ENCODE measurements at regions of chr3 and their contacts with region 1.

Region 1: DNA sequence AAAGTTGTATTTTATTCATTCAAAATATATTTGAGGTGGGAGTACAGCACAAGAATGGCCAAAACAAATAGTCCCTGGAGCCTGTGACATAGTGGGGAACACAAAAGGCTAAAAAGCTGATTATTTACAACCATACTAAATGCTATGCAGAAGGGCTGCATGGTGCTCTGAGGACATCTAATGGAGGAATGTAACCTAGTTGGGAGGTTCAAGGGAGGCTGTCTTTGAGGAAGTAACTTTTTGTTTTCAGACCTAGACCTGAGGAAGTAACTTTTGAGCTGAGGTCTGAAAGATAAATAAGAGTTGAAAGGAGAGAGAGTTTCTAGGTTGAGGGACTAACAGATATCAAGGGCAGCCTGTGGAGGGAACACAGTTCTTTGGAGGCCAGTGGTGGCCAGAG is 34.8 kb upstream of the RASA2 start:
- DNase-seq: peak in 5 of 9 experiments; percentile 28 to 77 (median 55)
- ATAC-seq: peak; percentile 88
- H3K4me3 ChIP-seq: no peak overlapping the region
- H3K4me3 Mint-ChIP-seq: no peak overlapping the region
- H3K27ac ChIP-seq: peak overlapping the region in 1 of 2 experiments; percentile 51
- H3K27ac Mint-ChIP-seq: no peak overlapping the region
- H3K4me1 ChIP-seq: peaks cover 15% of the 10 kb centered on the region
- H3K4me1 Mint-ChIP-seq: peaks cover 7% of the 10 kb centered on the region
- H3K27me3 ChIP-seq: no peaks in the 10 kb centered on the region
- H3K27me3 Mint-ChIP-seq: peaks cover 2% of the 10 kb centered on the region
- CTCF ChIP-seq: peak; percentile 55

Region 2: GRCh38 chr3:141011232-141011996 is 440.6 kb before region 1 on chr3:
- CTCF ChIA-PET with region 1: no interaction called
- POLR2A ChIA-PET with region 1: no interaction called
- intact Hi-C with region 1: loop called in 1 of 2 experiments (anchors 5 kb)
- DNase-seq: peak; percentile 48 to 85 (median 73)
- ATAC-seq: peak; percentile 99
- H3K4me3 ChIP-seq: no peak overlapping the region
- H3K4me3 Mint-ChIP-seq: no peak overlapping the region
- H3K27ac ChIP-seq: no peak overlapping the region
- H3K27ac Mint-ChIP-seq: no peak overlapping the region
- H3K4me1 ChIP-seq: peaks cover 5% of the 10 kb centered on the region
- H3K4me1 Mint-ChIP-seq: peaks cover 5% of the 10 kb centered on the region
- H3K27me3 ChIP-seq: peaks cover 0 to 6% of the 10 kb centered on the region in 2 experiments
- H3K27me3 Mint-ChIP-seq: peaks cover 22% of the 10 kb centered on the region
- CTCF ChIP-seq: peak; percentile 71

Region 3: GRCh38 chr3:141237701-141238521 is 214.1 kb before region 1 on chr3:
- CTCF ChIA-PET with region 1: interaction called, 6 read pairs
- POLR2A ChIA-PET with region 1: no interaction called
- intact Hi-C with region 1: loop called (anchors 5 kb)
- DNase-seq: peak in 3 of 9 experiments; percentile 19 to 55 (median 29)
- ATAC-seq: no peak
- H3K4me3 ChIP-seq: no peak overlapping the region
- H3K4me3 Mint-ChIP-seq: peak overlapping the region; percentile 69
- H3K27ac ChIP-seq: peak overlapping the region in 1 of 2 experiments; percentile 66
- H3K27ac Mint-ChIP-seq: peak overlapping the region; percentile 90
- H3K4me1 ChIP-seq: peaks cover 74% of the 10 kb centered on the region
- H3K4me1 Mint-ChIP-seq: peaks cover 90% of the 10 kb centered on the region
- H3K27me3 ChIP-seq: no peaks in the 10 kb centered on the region
- H3K27me3 Mint-ChIP-seq: no peaks in the 10 kb centered on the region
- CTCF ChIP-seq: no peak

Region 4: DNA sequence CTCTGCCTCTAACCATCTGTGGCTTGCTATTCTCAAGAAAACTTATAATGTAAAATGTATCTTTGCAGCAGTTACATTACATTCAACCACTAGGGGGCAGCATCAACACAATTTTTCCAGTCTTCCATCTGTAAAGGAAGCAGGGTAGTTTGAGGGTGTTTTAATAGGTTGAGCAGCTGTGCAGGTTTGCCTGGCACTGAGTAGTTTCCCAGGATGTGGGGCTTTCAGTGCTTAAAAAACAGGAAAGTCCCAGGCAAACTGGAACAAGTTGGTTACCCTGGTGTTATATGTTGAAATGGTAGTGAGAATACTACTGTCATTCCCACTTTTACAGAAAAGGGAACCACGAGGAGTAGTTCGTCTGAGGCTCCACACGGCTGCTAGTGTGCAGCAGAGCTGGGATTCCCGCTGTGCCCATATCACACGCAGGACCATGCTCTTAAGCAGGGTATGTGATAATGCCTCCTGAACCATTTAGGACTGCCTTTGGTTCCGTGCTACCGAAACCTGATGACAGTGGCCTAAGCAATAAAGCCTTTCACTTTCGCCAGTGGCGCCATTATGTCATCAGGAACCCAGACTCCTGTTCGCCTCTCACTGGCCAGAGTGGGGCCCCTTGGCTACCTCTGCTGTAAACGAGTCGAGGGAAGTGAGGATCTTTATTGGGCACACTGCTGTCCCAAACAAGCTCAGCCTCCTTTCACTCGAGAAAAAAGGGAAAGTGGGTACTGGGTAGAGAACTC is 148.4 kb before region 1 on chr3:
- CTCF ChIA-PET with region 1: interaction called, 242 read pairs
- POLR2A ChIA-PET with region 1: interaction called, 13 read pairs
- intact Hi-C with region 1: loop called (anchors 1 kb)
- DNase-seq: peak in 8 of 9 experiments; percentile 40 to 85 (median 64)
- ATAC-seq: peak; percentile 56
- H3K4me3 ChIP-seq: no peak overlapping the region
- H3K4me3 Mint-ChIP-seq: no peak overlapping the region
- H3K27ac ChIP-seq: no peak overlapping the region
- H3K27ac Mint-ChIP-seq: no peak overlapping the region
- H3K4me1 ChIP-seq: peaks cover 60% of the 10 kb centered on the region
- H3K4me1 Mint-ChIP-seq: peaks cover 66% of the 10 kb centered on the region
- H3K27me3 ChIP-seq: no peaks in the 10 kb centered on the region
- H3K27me3 Mint-ChIP-seq: no peaks in the 10 kb centered on the region
- CTCF ChIP-seq: peak; percentile 85

Region 5: GRCh38 chr3:141370065-141370533 is 81.9 kb before region 1 on chr3:
- CTCF ChIA-PET with region 1: interaction called, 67 read pairs
- POLR2A ChIA-PET with region 1: interaction called, 4 read pairs
- intact Hi-C with region 1: loop called in 1 of 2 experiments (anchors 1 kb)
- DNase-seq: peak; percentile 15 to 94 (median 54)
- ATAC-seq: peak; percentile 100
- H3K4me3 ChIP-seq: no peak overlapping the region
- H3K4me3 Mint-ChIP-seq: no peak overlapping the region
- H3K27ac ChIP-seq: no peak overlapping the region
- H3K27ac Mint-ChIP-seq: no peak overlapping the region
- H3K4me1 ChIP-seq: no peaks in the 10 kb centered on the region
- H3K4me1 Mint-ChIP-seq: peaks cover 9% of the 10 kb centered on the region
- H3K27me3 ChIP-seq: no peaks in the 10 kb centered on the region
- H3K27me3 Mint-ChIP-seq: no peaks in the 10 kb centered on the region
- CTCF ChIP-seq: peak; percentile 62

Region 6: GRCh38 chr3:141471160-141471559 is 19.1 kb after region 1 on chr3:
- CTCF ChIA-PET with region 1: interaction called, 52 read pairs
- POLR2A ChIA-PET with region 1: no interaction called
- intact Hi-C with region 1: no loop called
- DNase-seq: no peak
- ATAC-seq: no peak
- H3K4me3 ChIP-seq: no peak overlapping the region
- H3K4me3 Mint-ChIP-seq: no peak overlapping the region
- H3K27ac ChIP-seq: no peak overlapping the region
- H3K27ac Mint-ChIP-seq: no peak overlapping the region
- H3K4me1 ChIP-seq: peaks cover 18% of the 10 kb centered on the region
- H3K4me1 Mint-ChIP-seq: peaks cover 18% of the 10 kb centered on the region
- H3K27me3 ChIP-seq: no peaks in the 10 kb centered on the region
- H3K27me3 Mint-ChIP-seq: no peaks in the 10 kb centered on the region
- CTCF ChIP-seq: no peak

Measured in CD8-positive, alpha-beta T cell (primary cell).